ENCODE measurements at regions of chr1 and their contacts with region 1.

Region 1: DNA sequence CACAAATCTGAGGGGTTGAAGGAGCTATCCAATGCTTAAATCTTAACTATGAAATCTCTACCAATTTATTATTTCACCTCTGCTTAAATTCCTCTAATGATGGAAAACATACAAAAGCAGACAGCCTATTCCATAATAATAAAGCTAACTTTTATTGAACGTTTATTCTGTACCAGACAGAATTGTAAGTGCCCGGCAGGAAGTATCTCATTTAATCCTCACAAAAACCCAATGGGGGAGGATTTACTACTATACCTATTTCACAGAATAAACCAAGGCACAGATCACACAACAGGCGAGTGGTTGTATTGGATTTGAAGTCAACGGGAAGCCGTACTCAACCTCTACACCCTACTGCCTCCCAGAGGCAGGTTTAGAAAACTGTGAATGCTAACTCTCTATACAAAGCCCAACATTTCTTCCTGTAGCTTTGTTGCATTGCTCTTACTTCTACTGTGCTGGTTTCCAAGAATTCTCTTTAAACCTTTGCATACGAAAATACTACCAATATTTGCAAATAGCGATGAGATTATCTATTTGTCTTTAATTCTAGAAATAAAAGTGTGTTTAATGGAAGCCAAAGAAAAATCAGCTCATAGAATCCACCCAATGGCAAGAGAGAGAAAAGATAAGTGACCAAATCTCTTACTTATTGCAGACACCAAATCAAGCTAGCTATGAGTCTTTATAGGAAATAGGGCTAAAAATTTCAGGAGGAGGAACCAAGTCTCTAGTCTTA is 33.5 kb upstream of the C1orf53 start:
- DNase-seq: peak; percentile 45
- ATAC-seq: peak; percentile 73
- H3K4me3 ChIP-seq: no peak overlapping the region
- H3K4me3 Mint-ChIP-seq: no peak overlapping the region
- H3K27ac ChIP-seq: no peak overlapping the region
- H3K27ac Mint-ChIP-seq: no peak overlapping the region
- H3K4me1 ChIP-seq: no peaks in the 10 kb centered on the region
- H3K4me1 Mint-ChIP-seq: peaks cover 3% of the 10 kb centered on the region
- H3K27me3 ChIP-seq: no peaks in the 10 kb centered on the region
- H3K27me3 Mint-ChIP-seq: peaks cover 3% of the 10 kb centered on the region
- CTCF ChIP-seq: peak; percentile 81

Region 2: DNA sequence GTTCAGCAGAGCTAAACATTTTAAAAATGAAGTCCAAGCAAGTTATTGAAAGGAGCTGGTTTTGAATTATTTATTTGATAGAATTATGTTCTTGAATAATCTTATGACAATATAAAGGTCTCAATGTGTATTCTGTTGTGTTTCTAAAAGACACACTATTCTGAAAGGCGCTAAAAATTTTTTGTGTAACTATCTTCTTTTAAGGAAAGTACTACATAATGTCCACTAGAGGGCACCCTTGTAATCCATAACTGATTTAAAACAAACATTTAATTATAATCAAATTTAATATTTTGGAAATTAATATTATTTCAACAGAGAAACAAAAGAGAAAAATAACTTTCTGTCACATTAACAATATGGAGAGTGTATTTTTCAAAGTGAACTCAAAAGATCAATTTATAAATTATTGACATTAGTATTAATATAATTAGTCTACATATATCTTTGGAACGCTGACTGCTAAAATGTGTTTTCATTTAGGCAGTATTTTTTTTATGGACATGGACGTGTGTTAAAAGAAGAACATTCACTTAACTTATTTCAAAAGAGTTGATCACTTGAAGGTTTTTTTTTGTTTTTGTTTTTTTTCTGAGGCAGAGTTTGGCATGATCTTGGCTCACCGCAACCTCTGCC is 342.1 kb before region 1 on chr1:
- CTCF ChIA-PET with region 1: interaction called, 31 read pairs
- POLR2A ChIA-PET with region 1: no interaction called
- intact Hi-C with region 1: loop called (anchors 1 kb)
- DNase-seq: peak; percentile 48
- ATAC-seq: no peak
- H3K4me3 ChIP-seq: no peak overlapping the region
- H3K4me3 Mint-ChIP-seq: no peak overlapping the region
- H3K27ac ChIP-seq: no peak overlapping the region
- H3K27ac Mint-ChIP-seq: no peak overlapping the region
- H3K4me1 ChIP-seq: no peaks in the 10 kb centered on the region
- H3K4me1 Mint-ChIP-seq: no peaks in the 10 kb centered on the region
- H3K27me3 ChIP-seq: no peaks in the 10 kb centered on the region
- H3K27me3 Mint-ChIP-seq: no peaks in the 10 kb centered on the region
- CTCF ChIP-seq: peak; percentile 87

Region 3: GRCh38 chr1:197620714-197621163 is 248.2 kb before region 1 on chr1:
- CTCF ChIA-PET with region 1: interaction called, 171 read pairs
- POLR2A ChIA-PET with region 1: no interaction called
- intact Hi-C with region 1: loop called (anchors 1 kb)
- DNase-seq: no peak
- ATAC-seq: no peak
- H3K4me3 ChIP-seq: no peak overlapping the region
- H3K4me3 Mint-ChIP-seq: no peak overlapping the region
- H3K27ac ChIP-seq: no peak overlapping the region
- H3K27ac Mint-ChIP-seq: no peak overlapping the region
- H3K4me1 ChIP-seq: no peaks in the 10 kb centered on the region
- H3K4me1 Mint-ChIP-seq: no peaks in the 10 kb centered on the region
- H3K27me3 ChIP-seq: no peaks in the 10 kb centered on the region
- H3K27me3 Mint-ChIP-seq: no peaks in the 10 kb centered on the region
- CTCF ChIP-seq: no peak

Region 4: DNA sequence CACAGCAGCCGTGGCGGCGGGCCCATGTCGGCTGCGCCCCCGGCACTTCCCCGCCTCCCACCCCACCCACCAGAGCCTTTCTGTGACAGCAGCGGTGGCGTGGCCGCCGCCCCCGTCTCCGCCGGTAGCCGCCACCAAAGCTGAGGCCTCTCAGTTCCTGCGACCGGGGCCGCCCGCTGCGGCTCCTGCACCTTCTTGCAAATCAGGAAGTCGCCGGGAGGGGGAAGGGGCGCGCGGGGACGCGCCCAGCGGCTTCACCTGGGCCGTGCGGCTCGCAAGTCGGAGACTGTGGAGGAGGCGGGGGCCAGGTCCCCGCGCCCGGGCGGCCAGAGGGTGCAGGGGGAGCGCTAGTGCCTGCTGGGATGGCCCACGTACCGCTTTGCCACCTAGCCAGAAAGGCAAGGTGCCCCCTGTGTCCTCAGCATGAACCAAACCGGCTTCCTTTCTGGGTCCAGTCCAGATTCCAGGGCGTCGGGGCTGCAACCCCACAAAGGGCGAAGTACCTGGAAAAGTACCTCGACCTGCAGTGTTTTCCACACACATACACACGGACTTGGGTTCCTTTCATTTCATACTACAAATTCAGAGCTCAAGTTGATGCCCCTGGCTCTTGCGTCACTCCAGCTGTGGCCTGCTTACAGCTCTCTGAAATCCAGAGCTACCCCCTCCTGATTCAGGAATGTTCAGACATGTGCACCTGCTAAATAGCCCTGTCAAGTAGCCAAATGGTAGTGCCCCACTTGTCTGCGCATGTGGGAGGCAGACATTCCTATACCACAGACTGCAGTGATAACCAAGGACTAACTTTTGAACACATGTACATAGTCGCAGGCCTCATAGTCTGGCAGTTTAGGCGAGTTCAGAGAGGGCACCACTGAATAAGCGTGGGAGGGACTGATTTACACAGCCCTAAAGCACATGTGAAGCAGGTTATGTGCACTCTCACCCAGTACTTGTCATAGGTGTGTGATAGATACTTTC is 93.3 kb before region 1 on chr1 and contains the start of gene DENND1B:
- CTCF ChIA-PET with region 1: interaction called, 16 read pairs
- POLR2A ChIA-PET with region 1: no interaction called
- intact Hi-C with region 1: no loop called
- DNase-seq: peak; percentile 90
- ATAC-seq: peak; percentile 74
- H3K4me3 ChIP-seq: peak within 1 kb of the TSS; percentile 55 to 78 (median 67)
- H3K4me3 Mint-ChIP-seq: peak within 1 kb of the TSS; percentile 89
- H3K27ac ChIP-seq: peak within 1 kb of the TSS; percentile 86 to 89
- H3K27ac Mint-ChIP-seq: peak within 1 kb of the TSS; percentile 99
- H3K4me1 ChIP-seq: peaks cover 28 to 47% of the 10 kb centered on the region in 2 donors
- H3K4me1 Mint-ChIP-seq: peaks cover 68% of the 10 kb centered on the region
- H3K27me3 ChIP-seq: no peaks in the 10 kb centered on the region
- H3K27me3 Mint-ChIP-seq: no peaks in the 10 kb centered on the region
- CTCF ChIP-seq: peak; percentile 15
- total RNA-seq, gene DENND1B: 24.8 and 25.4 TPM in 2 replicates

Region 5: GRCh38 chr1:197902454-197903195 is 33.7 kb after region 1 on chr1 and contains the start of gene C1orf53:
- CTCF ChIA-PET with region 1: interaction called, 10 read pairs
- POLR2A ChIA-PET with region 1: no interaction called
- intact Hi-C with region 1: no loop called
- DNase-seq: peak; percentile 88
- ATAC-seq: peak; percentile 93
- H3K4me3 ChIP-seq: peak within 1 kb of the TSS; percentile 59 to 84 (median 77)
- H3K4me3 Mint-ChIP-seq: peak within 1 kb of the TSS; percentile 98
- H3K27ac ChIP-seq: peak within 1 kb of the TSS; percentile 39 to 61
- H3K27ac Mint-ChIP-seq: peak within 1 kb of the TSS; percentile 90
- H3K4me1 ChIP-seq: peaks cover 13 to 17% of the 10 kb centered on the region in 2 donors
- H3K4me1 Mint-ChIP-seq: peaks cover 17% of the 10 kb centered on the region
- H3K27me3 ChIP-seq: peaks cover 1 to 43% (median 34%) of the 10 kb centered on the region in 4 experiments
- H3K27me3 Mint-ChIP-seq: peaks cover 52% of the 10 kb centered on the region
- CTCF ChIP-seq: no peak
- total RNA-seq, gene C1orf53: not detected in 2 replicates

Measured in B cell (primary cell).